RWPE1 (cell line): ENCODE measurements at regions of chr1 and their contacts with region 1.

Region 1: GRCh38 chr1:109640285-109640865 is 15.5 kb upstream of the GSTM4 start:
- DNase-seq: peak; percentile 50
- H3K27ac ChIP-seq: no peak overlapping the region
- CTCF ChIP-seq: peak; percentile 86

Region 2: DNA sequence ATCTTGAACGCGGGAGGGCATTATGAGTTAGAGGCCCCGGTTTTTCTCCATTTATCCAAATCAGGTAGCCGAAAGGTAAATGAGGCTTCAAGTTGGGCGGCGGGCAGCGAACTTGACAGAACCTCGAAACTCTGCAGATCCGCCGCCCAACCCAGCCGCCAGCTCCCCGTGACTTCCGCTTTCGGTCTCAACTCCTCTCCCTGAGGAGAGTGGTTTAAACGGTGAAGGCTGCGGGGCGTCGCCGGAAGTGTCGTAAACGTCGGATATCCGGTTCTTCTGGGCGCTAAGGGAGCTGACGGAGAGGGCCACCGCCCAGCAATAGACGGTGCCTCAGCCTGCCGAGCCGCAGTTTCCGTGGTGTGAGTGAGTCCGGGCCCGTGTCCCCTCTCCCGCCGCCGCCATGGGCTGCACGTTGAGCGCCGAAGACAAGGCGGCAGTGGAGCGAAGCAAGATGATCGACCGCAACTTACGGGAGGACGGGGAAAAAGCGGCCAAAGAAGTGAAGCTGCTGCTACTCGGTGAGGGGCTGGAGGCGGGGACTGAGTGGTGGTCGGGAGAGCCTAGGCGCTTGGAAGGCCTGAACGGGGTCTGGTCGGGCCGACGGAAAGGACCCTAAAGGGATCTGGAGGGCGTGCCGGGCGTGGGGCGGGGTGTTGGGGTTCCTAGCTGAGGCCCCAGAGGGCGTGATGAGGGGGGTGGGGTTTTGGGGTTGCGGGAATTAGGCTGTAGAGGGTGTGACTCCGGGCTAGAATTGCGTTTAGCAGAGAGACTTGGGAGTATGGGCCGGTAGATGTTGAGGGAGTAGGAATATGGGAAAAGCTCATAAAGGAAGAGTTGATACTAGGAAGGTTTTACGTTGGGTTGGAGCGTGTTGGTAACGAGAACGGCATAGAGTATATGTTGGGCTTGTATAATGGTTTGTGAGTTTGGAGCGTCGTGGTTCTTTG is 91.8 kb before region 1 on chr1 and contains the start of gene GNAI3:
- CTCF ChIA-PET with region 1: interaction called, 22 read pairs
- POLR2A ChIA-PET with region 1: no interaction called
- DNase-seq: peak; percentile 96
- H3K27ac ChIP-seq: peak within 1 kb of the TSS; percentile 84
- CTCF ChIP-seq: no peak

Region 3: DNA sequence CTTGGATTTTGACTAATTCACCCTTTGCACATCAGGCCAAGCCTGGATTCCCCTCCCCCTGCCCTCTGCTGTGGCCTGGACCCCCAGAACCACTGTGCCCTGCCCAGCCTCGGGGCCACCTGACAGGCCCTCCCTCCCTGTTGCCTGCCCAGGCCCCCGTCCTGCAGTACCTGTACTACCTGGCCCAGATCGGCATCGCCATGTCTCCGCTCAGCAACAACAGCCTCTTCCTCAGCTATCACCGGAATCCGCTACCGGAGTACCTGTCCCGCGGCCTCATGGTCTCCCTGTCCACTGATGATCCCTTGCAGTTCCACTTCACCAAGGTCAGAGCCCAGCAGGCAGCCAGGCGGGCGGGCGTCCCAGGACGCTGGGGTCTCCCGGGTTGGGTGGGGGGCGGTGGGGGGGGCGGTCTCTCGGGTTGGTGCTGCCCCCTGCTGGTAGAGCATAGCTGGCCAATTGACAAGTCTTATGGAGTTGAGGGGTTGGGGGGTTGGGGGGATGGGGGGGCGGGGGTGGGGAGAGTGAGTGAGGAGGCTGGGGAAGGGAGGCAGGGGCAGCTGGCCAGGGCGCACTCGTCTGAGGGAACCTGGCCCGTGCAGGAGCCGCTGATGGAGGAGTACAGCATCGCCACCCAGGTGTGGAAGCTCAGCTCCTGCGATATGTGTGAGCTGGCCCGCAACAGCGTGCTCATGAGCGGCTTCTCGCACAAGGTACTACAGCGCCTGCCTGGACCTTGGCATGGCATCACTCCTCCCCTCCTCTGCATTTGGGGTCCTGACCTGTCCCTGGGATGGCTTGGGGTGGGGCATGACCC is 10.1 kb before region 1 on chr1:
- CTCF ChIA-PET with region 1: interaction called, 17 read pairs
- POLR2A ChIA-PET with region 1: no interaction called
- DNase-seq: peak; percentile 27
- H3K27ac ChIP-seq: no peak overlapping the region
- CTCF ChIP-seq: peak; percentile 39

Region 4: GRCh38 chr1:109750920-109751319 is 110.5 kb after region 1 on chr1:
- CTCF ChIA-PET with region 1: interaction called, 10 read pairs
- POLR2A ChIA-PET with region 1: no interaction called
- DNase-seq: no peak
- H3K27ac ChIP-seq: no peak overlapping the region
- CTCF ChIP-seq: no peak

Region 5: GRCh38 chr1:109773146-109773899 is 132.9 kb after region 1 on chr1:
- CTCF ChIA-PET with region 1: interaction called, 97 read pairs
- POLR2A ChIA-PET with region 1: no interaction called
- DNase-seq: peak; percentile 75
- H3K27ac ChIP-seq: no peak overlapping the region
- CTCF ChIP-seq: peak; percentile 85

Region 6: GRCh38 chr1:109984456-109985275 is 344.3 kb after region 1 on chr1 and contains the start of gene AHCYL1:
- CTCF ChIA-PET with region 1: interaction called, 15 read pairs
- POLR2A ChIA-PET with region 1: no interaction called
- DNase-seq: peak; percentile 99
- H3K27ac ChIP-seq: peak within 1 kb of the TSS; percentile 85
- CTCF ChIP-seq: peak; percentile 95